Posterior vena cava (tissue), 2 donors: ENCODE measurements at regions of chr15 and their contacts with region 1.

Region 1: GRCh38 chr15:39786447-39787056 is 3.9 kb upstream of the FSIP1 start:
- DNase-seq: no peak

Region 2: DNA sequence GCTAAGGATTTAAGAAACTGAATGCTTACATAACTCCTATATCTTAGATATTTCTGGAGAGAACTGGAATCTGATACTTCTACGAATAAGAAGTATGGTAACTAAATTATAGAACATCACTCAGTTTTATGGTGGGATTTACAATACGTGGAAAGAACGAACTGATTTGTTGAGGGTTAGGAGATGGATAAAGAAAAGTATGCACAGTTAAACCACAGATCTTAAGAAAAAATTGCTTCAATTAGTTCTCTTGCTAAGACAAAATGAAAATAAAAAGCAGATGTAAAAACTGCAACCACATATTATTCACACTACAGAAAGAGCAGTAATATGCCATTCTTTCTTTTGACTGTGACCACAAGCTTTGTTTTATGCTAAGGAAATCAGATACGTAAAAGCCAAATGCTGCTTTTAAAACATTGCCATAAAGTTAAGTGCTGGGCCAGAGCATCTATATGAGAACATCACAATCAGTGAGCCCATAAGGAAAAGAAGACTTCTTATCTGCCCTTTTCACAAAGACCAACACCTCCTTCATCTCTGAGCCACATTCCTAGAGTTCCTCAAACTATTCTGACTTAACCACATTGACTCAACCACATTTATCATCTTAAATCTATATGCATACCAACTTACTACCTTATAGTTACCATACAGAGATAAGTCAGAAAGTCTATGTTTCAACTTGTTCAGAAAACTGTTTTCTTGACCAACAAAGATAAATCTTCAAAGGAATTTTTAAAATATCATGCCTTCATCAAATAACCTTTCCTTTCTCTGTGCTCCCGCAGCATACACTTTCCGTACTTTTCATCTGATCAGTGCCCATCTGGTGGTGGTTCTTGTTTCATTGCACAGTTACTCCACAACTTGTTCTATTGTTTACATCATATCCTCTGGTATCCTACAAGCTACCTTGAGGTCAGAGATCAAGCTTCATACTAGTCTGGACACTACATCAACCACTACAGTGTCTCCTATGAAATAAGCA is 65.6 kb before region 1 on chr15:
- intact Hi-C with region 1: no loop called
- DNase-seq: no peak

Region 3: GRCh38 chr15:39855400-39855799 is 68.8 kb after region 1 on chr15:
- intact Hi-C with region 1: loop called in 1 of 2 experiments (anchors 5 kb)
- DNase-seq: no peak